ENCODE measurements at regions of chr1 and their contacts with region 1.

Region 1: GRCh38 chr1:94379615-94380014 is 38.6 kb upstream of the ABCD3 start:
- DNase-seq: no peak
- ATAC-seq: no peak
- H3K4me3 ChIP-seq: no peak overlapping the region
- H3K27ac ChIP-seq: no peak overlapping the region
- H3K4me1 ChIP-seq: peaks cover 24% of the 10 kb centered on the region
- H3K27me3 ChIP-seq: no peaks in the 10 kb centered on the region
- CTCF ChIP-seq: no peak

Region 2: GRCh38 chr1:94362466-94363058 is 17.1 kb before region 1 on chr1:
- CTCF ChIA-PET with region 1: no interaction called
- POLR2A ChIA-PET with region 1: no interaction called
- intact Hi-C with region 1: no loop called
- DNase-seq: peak; percentile 70
- ATAC-seq: peak; percentile 59
- H3K4me3 ChIP-seq: no peak overlapping the region
- H3K27ac ChIP-seq: no peak overlapping the region
- H3K4me1 ChIP-seq: no peaks in the 10 kb centered on the region
- H3K27me3 ChIP-seq: no peaks in the 10 kb centered on the region
- CTCF ChIP-seq: no peak

Region 3: DNA sequence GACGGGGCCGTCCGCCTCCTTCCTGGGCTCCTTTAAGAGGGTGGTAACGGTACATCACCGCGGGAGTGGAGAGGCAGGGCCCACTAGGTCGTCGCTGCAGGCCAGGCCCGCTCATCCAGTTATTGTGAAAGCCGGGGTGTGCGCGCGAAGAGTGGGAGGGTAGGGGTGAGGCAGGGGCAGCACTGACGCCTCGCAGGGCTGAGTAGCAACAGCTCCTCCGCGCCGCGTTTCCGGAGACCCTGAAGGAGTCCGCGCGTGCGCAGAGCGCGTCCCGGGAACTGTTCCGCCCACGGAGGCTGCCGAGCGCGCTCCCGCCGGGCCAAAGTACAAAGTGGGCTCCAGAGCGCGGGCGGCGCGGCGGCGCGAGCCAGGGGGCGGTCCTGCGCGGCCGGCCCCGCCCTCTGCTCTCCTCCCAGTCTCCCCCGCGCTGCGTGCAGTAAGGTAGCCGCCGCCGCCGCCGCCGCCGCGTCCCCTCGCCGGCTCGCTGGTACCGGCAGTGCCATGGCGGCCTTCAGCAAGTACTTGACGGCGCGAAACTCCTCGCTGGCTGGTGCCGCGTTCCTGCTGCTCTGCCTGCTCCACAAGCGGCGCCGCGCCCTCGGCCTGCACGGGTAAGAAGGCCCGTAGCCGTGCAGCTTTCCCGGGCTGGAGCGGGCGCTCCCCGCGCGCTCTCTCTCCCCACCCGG is 38.5 kb after region 1 on chr1 and contains the start of gene ABCD3:
- CTCF ChIA-PET with region 1: no interaction called
- POLR2A ChIA-PET with region 1: no interaction called
- intact Hi-C with region 1: loop called (anchors 5 kb)
- DNase-seq: peak; percentile 97
- ATAC-seq: peak; percentile 83
- H3K4me3 ChIP-seq: peak within 1 kb of the TSS; percentile 85
- H3K27ac ChIP-seq: peak within 1 kb of the TSS; percentile 38
- H3K4me1 ChIP-seq: peaks cover 40% of the 10 kb centered on the region
- H3K27me3 ChIP-seq: no peaks in the 10 kb centered on the region
- CTCF ChIP-seq: no peak
- total RNA-seq, gene ABCD3: 31.7 and 36.3 TPM in 2 replicates